AG04449 (cell line): ENCODE measurements at regions of chr2 and their contacts with region 1.

Region 1: DNA sequence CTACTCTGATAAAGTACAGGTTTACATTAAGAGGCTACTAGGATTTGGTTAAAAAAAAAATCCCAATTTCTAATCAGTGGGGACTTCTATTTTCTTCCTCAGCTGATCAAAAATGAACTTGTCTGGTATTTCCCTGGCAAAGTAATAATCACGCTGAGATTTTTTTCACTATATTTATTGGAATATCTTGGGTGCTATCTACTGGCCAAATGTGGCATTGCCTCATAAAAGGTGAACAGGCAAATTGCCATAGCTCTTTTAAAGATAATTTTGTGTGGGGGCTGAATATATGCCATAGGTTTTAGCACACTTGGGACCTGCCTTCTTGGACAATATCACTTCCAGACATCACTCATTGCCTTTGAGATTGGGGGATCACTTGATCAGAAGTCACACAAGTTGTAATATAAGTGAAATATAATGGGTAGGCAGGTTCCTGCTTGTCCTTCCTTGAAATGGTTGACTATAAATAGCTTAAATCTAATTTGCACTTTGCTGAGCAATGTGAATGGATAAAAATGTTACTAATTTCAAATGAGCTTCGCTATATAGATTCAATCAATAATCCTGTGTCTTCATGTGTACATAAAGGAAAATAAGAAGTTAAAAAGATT is 7.0 kb upstream of the NXPH2 start:
- DNase-seq: no peak
- H3K4me3 ChIP-seq: no peak overlapping the region
- CTCF ChIP-seq: peak; percentile 43

Region 2: GRCh38 chr2:137888845-137889244 is 898.3 kb before region 1 on chr2:
- CTCF ChIA-PET with region 1: interaction called, 12 read pairs
- POLR2A ChIA-PET with region 1: no interaction called
- DNase-seq: no peak
- H3K4me3 ChIP-seq: no peak overlapping the region
- CTCF ChIP-seq: peak; percentile 44

Region 3: DNA sequence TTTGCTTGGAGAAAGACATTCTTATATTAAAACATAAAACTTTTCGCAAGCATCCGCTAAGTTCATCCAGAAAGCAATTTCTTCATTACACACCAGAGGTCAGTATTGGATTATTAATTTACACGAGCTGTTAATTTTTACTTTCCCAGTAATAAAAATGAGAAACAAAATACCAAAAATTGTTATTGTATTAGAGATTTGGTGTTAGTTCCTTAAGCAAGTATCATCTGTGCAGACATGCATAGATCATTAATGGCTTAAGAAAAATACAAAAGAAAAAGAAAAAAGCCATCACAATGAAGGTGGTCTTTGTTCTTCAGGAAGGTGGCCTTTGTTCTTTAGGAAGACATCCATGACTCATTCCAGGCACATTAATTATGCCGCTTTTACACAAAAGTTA is 876.5 kb before region 1 on chr2:
- CTCF ChIA-PET with region 1: interaction called, 24 read pairs
- POLR2A ChIA-PET with region 1: no interaction called
- DNase-seq: no peak
- H3K4me3 ChIP-seq: no peak overlapping the region
- CTCF ChIP-seq: peak; percentile 16

Region 4: GRCh38 chr2:138356178-138356577 is 431.0 kb before region 1 on chr2:
- CTCF ChIA-PET with region 1: no interaction called
- POLR2A ChIA-PET with region 1: no interaction called
- DNase-seq: no peak
- H3K4me3 ChIP-seq: no peak overlapping the region
- CTCF ChIP-seq: no peak